Naive thymus-derived CD4-positive, alpha-beta T cell (primary cell): ENCODE measurements at regions of chr7 and their contacts with region 1.

Region 1: DNA sequence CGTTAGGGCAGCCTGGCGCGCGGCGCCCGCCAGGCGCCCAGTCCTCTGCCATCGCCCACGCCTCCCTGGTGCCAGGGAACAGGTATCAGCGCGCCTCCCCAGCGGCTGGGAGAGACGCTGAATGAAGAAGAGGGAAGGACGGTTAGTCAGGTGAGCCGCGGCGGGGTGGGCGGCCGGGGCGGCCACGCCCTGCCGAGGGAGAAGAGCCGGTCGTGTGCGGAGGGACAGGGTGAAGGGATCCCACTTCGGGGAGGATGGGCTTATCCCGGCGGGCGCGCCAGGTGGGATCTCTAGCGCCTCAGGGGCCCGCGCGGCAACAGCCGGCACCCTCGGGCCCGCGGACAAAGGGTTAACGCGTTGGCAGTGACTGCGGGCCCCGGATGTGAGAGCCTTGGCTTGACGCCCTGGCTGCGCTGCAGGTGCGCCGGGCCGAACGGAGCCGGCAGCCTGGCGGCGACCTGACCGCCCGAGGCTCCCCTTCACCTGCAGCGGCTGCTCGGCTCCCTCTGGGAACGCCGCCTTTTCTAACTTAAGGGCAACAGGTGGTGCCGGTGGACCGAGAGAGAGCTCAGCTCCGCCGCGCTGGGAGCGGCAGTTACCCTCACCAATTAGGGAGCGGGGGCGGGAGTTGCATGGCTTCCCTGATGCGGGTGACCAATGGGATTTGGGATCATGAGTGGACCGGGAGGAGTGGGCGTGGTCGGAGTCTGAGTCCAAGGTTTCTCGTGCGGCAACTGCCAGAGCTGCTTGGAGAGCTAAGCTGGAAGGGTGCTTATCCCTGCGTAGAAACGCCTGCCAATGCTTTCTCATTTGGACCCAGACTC is at the start of gene ARL4A:
- DNase-seq: peak; percentile 70 to 87 (median 85)
- ATAC-seq: peak; percentile 60
- H3K4me3 ChIP-seq: peak within 1 kb of the TSS; percentile 76
- H3K4me3 Mint-ChIP-seq: peak within 1 kb of the TSS; percentile 94 to 100 (median 96)
- H3K27ac ChIP-seq: peak within 1 kb of the TSS; percentile 95
- H3K27ac Mint-ChIP-seq: peak within 1 kb of the TSS; percentile 83 to 98 (median 96)
- H3K4me1 ChIP-seq: peaks cover 5 to 14% of the 10 kb centered on the region in 2 donors
- H3K4me1 Mint-ChIP-seq: peaks cover 7 to 35% (median 25%) of the 10 kb centered on the region in 7 donors
- H3K27me3 ChIP-seq: no peaks in the 10 kb centered on the region
- H3K27me3 Mint-ChIP-seq: no peaks in the 10 kb centered on the region
- total RNA-seq, gene ARL4A: 5.5 to 97.4 (median 11.6) TPM

Region 2: GRCh38 chr7:12211054-12211710 is 475.9 kb before region 1 on chr7 and contains the start of gene TMEM106B:
- CTCF ChIA-PET with region 1: no interaction called
- POLR2A ChIA-PET with region 1: no interaction called
- intact Hi-C with region 1: loop called (anchors 1 kb)
- DNase-seq: peak; percentile 93 to 97 (median 96)
- ATAC-seq: peak; percentile 94
- H3K4me3 ChIP-seq: peak within 1 kb of the TSS; percentile 78
- H3K4me3 Mint-ChIP-seq: peak within 1 kb of the TSS; percentile 87 to 98 (median 97)
- H3K27ac ChIP-seq: peak within 1 kb of the TSS; percentile 97
- H3K27ac Mint-ChIP-seq: peak within 1 kb of the TSS; percentile 95 to 100 (median 99)
- H3K4me1 ChIP-seq: peaks cover 12 to 22% of the 10 kb centered on the region in 2 donors
- H3K4me1 Mint-ChIP-seq: peaks cover 25 to 56% (median 41%) of the 10 kb centered on the region in 7 donors
- H3K27me3 ChIP-seq: no peaks in the 10 kb centered on the region
- H3K27me3 Mint-ChIP-seq: peaks cover 0 to 35% (median 0%) of the 10 kb centered on the region in 5 donors
- total RNA-seq, gene TMEM106B: 22.8 to 69.2 (median 40.1) TPM

Region 3: DNA sequence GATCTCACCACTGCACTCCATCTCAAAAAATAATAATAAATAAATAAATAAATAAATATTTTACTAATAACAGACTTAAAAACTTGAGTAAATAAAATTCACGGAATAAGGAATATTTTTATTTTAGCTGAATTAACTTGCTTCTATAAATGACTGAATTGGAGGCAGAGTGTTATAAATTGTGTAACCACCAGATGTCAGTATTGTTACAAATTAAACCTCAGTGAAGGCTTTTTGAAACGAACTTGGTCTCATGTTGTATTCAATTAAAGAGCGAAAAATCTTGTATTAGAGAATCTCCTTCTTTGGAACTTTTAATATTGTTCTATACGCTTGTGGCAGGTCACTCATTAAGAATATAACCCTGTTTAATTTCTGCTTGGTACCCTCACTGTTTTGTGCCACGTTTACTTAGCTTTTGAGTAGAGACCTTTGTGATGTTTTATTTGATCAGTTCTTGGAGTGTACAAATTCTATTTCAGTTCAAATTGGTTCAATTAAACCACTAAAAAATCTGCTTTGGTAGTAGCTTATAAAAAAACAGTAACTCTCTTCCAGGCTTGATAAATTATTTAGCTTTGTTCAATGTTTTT is 162.2 kb before region 1 on chr7:
- CTCF ChIA-PET with region 1: no interaction called
- POLR2A ChIA-PET with region 1: no interaction called
- intact Hi-C with region 1: loop called in 1 of 2 experiments (anchors 1 kb)
- DNase-seq: peak in 5 of 9 donors; percentile 10 to 36 (median 24)
- ATAC-seq: peak; percentile 59
- H3K4me3 ChIP-seq: no peak overlapping the region
- H3K4me3 Mint-ChIP-seq: no peak overlapping the region
- H3K27ac ChIP-seq: no peak overlapping the region
- H3K27ac Mint-ChIP-seq: no peak overlapping the region
- H3K4me1 ChIP-seq: no peaks in the 10 kb centered on the region
- H3K4me1 Mint-ChIP-seq: no peaks in the 10 kb centered on the region
- H3K27me3 ChIP-seq: no peaks in the 10 kb centered on the region
- H3K27me3 Mint-ChIP-seq: peaks cover 14 to 60% (median 37%) of the 10 kb centered on the region in 5 donors

Region 4: GRCh38 chr7:12715372-12716133 is 28.4 kb after region 1 on chr7:
- CTCF ChIA-PET with region 1: no interaction called
- POLR2A ChIA-PET with region 1: interaction called, 3 read pairs
- intact Hi-C with region 1: loop called in 1 of 2 experiments (anchors 2 kb)
- DNase-seq: peak in 1 of 9 donors; percentile 34
- ATAC-seq: peak; percentile 70
- H3K4me3 ChIP-seq: no peak overlapping the region
- H3K4me3 Mint-ChIP-seq: peak overlapping the region in 4 of 10 donors; percentile 7 to 63 (median 44)
- H3K27ac ChIP-seq: no peak overlapping the region
- H3K27ac Mint-ChIP-seq: peak overlapping the region in 2 of 9 donors; percentile 7 to 76
- H3K4me1 ChIP-seq: peaks cover 0 to 8% of the 10 kb centered on the region in 2 donors
- H3K4me1 Mint-ChIP-seq: peaks cover 0 to 43% (median 20%) of the 10 kb centered on the region in 7 donors
- H3K27me3 ChIP-seq: no peaks in the 10 kb centered on the region
- H3K27me3 Mint-ChIP-seq: no peaks in the 10 kb centered on the region

Region 5: DNA sequence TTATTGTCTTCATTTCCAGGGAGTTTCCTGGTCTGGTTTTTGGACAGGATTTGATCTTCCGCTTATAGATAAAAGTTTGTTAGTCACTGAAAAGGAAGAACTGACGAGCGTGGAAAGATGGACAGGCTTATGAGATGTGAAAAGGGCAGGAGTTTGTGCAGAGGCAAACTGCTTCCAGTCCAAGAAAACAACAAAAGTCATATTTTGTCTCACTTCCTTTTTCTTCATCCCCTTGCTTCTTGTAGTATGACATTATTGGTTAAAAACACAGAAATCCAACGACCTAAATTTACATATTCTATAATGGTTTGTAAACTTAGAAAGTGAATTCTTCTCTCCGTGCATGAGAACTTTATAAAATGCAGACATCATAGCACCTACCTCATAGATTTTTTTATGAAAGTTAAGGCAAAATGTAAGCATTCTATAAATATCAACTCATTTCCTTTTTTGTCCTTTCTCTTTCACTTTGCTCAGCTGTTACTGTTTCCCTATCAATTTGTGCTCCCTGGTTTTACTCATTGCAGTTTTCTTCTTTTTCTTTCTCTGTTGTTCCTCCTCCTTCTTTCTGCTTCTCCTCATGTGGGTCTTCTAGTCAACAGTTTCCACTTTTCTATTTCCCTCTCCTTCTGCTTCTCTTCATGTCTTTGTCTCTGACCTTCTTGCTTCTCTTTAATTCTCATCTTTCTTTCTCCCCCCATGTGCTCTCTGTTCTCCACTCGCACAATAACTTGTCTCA is 370.5 kb after region 1 on chr7:
- CTCF ChIA-PET with region 1: no interaction called
- POLR2A ChIA-PET with region 1: no interaction called
- intact Hi-C with region 1: loop called in 1 of 2 experiments (anchors 1 kb)
- DNase-seq: no peak
- ATAC-seq: no peak
- H3K4me3 ChIP-seq: no peak overlapping the region
- H3K4me3 Mint-ChIP-seq: peak overlapping the region; percentile 25 to 83 (median 60)
- H3K27ac ChIP-seq: no peak overlapping the region
- H3K27ac Mint-ChIP-seq: peak overlapping the region in 6 of 9 donors; percentile 20 to 91 (median 44)
- H3K4me1 ChIP-seq: peaks cover 0 to 3% of the 10 kb centered on the region in 2 donors
- H3K4me1 Mint-ChIP-seq: peaks cover 7 to 17% (median 14%) of the 10 kb centered on the region in 7 donors
- H3K27me3 ChIP-seq: no peaks in the 10 kb centered on the region
- H3K27me3 Mint-ChIP-seq: peaks cover 0 to 9% (median 7%) of the 10 kb centered on the region in 5 donors

Region 6: GRCh38 chr7:13262929-13263530 is 575.9 kb after region 1 on chr7:
- CTCF ChIA-PET with region 1: interaction called, 5 read pairs
- POLR2A ChIA-PET with region 1: no interaction called
- intact Hi-C with region 1: loop called (anchors 1 to 2 kb)
- DNase-seq: peak in 6 of 9 donors; percentile 4 to 42 (median 22)
- ATAC-seq: peak; percentile 52
- H3K4me3 ChIP-seq: no peak overlapping the region
- H3K4me3 Mint-ChIP-seq: no peak overlapping the region
- H3K27ac ChIP-seq: no peak overlapping the region
- H3K27ac Mint-ChIP-seq: no peak overlapping the region
- H3K4me1 ChIP-seq: no peaks in the 10 kb centered on the region
- H3K4me1 Mint-ChIP-seq: no peaks in the 10 kb centered on the region
- H3K27me3 ChIP-seq: no peaks in the 10 kb centered on the region
- H3K27me3 Mint-ChIP-seq: peaks cover 0 to 11% (median 5%) of the 10 kb centered on the region in 5 donors